ENCODE measurements at regions of chr16 and their contacts with region 1.

Region 1: DNA sequence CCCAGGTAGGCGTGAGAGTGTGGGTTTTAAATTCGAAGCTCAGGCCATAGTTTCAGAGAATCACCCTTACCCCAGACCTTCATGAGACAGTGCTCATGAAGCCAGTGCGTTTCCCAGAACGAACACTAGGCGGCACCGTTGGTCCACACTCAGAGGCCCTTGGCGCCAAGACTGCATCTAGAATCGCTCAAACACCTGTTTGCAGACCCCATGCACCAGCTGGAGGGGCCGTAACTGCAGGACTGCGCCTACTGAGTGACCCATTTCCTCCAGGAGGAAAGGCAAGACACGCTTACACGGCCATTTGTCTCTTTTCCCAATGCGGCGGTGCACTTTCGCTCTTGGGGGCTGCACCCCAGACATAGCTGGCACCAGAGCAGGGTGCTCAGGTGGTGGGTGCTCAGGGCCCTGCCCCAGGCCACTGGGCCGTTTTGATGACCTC is 34.0 kb downstream of the ADGRG5 start:
- DNase-seq: peak; percentile 75
- H3K4me3 ChIP-seq: no peak overlapping the region
- H3K27ac ChIP-seq: no peak overlapping the region
- H3K4me1 ChIP-seq: no peaks in the 10 kb centered on the region
- H3K27me3 ChIP-seq: no peaks in the 10 kb centered on the region
- CTCF ChIP-seq: peak; percentile 97

Region 2: DNA sequence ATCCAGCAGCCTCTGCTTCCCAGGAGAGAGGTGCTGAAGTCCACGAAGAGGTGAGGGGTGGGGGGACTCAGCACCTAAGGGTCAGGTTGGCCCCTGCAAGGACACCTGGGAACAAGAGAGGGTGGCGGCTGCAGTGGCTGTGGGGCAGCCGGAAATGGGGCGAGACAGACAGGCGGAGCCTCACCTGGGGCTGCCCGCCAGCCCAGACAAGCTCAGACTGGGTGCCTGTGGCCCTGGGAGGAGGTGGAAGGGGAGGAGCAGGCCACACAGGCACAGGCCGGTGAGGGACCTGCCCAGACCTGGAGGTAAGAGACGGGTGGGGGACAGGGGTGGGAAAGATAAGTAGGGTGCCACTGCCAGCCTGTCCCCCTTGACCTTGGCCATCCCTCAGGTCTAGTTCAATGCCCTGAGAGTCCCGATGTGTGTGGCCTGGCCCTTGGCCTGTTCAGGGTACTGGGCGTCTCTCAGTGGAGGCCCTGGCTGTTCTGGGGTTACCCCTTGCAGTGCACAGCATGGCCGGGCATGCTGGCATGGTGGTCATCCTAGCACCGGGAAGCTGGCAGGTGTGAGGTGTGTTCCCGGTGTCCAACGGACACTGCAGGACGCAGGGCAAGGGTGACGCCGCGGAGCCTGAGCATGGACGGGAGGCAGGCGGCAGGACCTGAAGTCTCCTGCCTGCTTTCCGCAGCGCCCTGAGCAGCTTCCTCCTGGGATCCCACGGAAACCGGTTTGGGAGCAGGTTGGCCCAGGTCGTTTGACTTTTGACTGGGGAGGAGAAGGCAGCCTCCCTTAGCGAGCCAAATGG is 43.6 kb after region 1 on chr16:
- CTCF ChIA-PET with region 1: no interaction called
- POLR2A ChIA-PET with region 1: no interaction called
- intact Hi-C with region 1: no loop called
- DNase-seq: no peak
- H3K4me3 ChIP-seq: no peak overlapping the region
- H3K27ac ChIP-seq: no peak overlapping the region
- H3K4me1 ChIP-seq: no peaks in the 10 kb centered on the region
- H3K27me3 ChIP-seq: no peaks in the 10 kb centered on the region
- CTCF ChIP-seq: no peak

Region 3: DNA sequence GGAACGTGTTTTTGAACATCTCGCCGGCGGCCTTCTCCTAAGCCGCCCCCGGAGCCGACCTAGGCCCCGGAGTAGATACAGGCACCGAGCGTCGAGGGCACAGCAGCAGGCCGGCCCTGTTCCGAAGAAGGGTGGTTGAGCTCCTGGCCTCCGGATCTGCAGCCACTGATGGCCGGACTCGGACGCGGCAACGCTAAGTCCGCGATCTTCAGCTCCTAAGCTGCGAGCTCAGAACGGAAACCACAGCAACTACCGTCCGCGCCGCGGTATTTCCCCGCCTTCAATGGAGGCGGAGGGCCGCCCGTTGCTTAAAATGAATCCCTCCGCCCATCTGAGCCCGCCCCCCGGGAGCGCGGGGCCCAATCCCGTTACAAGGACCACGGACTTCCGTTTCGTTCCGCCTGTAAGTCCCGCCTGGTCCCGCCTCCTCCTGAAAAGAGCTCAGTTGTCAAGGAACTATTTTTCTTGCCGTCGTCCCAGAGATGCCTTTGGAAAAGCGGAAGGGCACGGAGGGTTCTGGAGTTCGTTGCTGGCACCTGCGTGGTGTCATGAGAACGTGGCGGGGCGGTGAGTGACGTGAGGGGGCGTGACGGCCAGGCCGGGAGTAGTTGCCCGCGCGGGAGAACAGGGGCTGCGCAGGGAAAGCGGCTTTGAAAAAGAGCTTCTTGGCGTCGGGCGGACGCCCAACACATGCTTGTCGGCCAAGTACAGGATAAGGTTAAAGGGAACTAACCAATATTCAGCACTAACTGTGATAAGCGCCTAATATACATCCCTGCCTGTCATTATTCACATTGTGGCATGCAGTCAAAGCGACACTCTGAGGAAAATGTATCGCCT is 552.9 kb after region 1 on chr16 and contains the start of gene CFAP20:
- CTCF ChIA-PET with region 1: no interaction called
- POLR2A ChIA-PET with region 1: no interaction called
- intact Hi-C with region 1: loop called (anchors 10 kb)
- DNase-seq: peak; percentile 100
- H3K4me3 ChIP-seq: peak within 1 kb of the TSS; percentile 95
- H3K27ac ChIP-seq: peak within 1 kb of the TSS; percentile 92
- H3K4me1 ChIP-seq: peaks cover 27% of the 10 kb centered on the region
- H3K27me3 ChIP-seq: no peaks in the 10 kb centered on the region
- CTCF ChIP-seq: no peak
- total RNA-seq, gene CFAP20: 66.3 and 81.6 TPM in 2 replicates

Region 4: GRCh38 chr16:58494981-58495520 is 918.6 kb after region 1 on chr16:
- CTCF ChIA-PET with region 1: no interaction called
- POLR2A ChIA-PET with region 1: no interaction called
- intact Hi-C with region 1: loop called (anchors 5 kb)
- DNase-seq: peak; percentile 92
- H3K4me3 ChIP-seq: no peak overlapping the region
- H3K27ac ChIP-seq: no peak overlapping the region
- H3K4me1 ChIP-seq: no peaks in the 10 kb centered on the region
- H3K27me3 ChIP-seq: no peaks in the 10 kb centered on the region
- CTCF ChIP-seq: peak; percentile 61

Measured in A673 (cell line).